GM12878 (cell line): ENCODE measurements at regions of chr1 and their contacts with region 1.

Region 1: DNA sequence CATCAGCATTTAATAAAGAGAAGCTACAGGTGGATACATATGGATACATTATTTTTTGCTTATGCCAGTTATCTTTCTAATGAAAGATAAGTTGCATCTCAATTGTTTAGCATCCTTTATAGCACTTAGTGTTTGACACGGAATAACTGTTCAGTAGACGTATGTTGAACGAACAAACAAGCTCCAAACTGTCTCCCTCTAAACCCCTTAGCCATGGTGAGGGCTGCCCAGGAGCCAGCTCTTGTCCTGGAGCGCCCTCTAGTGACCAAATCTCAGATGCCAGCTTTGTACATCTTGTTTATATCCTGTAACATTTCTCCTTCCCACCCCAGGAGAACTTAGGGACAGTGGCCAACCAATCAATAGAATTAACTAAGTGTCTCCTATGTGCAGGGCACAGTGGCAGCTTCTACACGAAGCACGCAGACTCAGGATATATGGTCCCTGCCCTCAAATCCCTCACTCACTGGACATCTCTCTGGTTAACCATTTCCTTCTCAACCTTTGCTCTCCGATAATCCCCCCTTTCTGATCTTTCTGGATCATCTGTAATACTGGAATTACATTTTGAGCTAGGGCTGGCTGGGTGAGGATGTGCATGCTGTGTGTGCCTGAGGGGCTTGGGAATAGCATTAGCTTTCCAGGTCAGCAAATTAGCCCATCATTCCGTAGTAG is 22.9 kb downstream of the KCNA10 start:
- DNase-seq: no peak
- ATAC-seq: peak; percentile 96
- H3K4me3 ChIP-seq: no peak overlapping the region
- H3K27ac ChIP-seq: no peak overlapping the region
- H3K4me1 ChIP-seq: no peaks in the 10 kb centered on the region
- H3K27me3 ChIP-seq: no peaks in the 10 kb centered on the region; a peak in 1 of 4 replicates
- CTCF ChIP-seq: peak; percentile 91 to 93 (median 91)
- EP300 ChIP-seq: no peak
- POLR2A ChIP-seq: no peak
- RAD21 ChIP-seq: peak; percentile 94

Region 2: GRCh38 chr1:110203021-110203661 is 292.9 kb before region 1 on chr1:
- CTCF ChIA-PET with region 1: interaction called, 71 read pairs
- POLR2A ChIA-PET with region 1: no interaction called
- RAD21 ChIA-PET with region 1: interaction called, 22 read pairs
- SMC1A ChIA-PET with region 1: interaction called, 28 read pairs
- in situ Hi-C with region 1: no loop called
- intact Hi-C with region 1: loop called (anchors 1 kb)
- DNase-seq: peak; percentile 17
- ATAC-seq: peak; percentile 84
- H3K4me3 ChIP-seq: no peak overlapping the region
- H3K27ac ChIP-seq: no peak overlapping the region
- H3K4me1 ChIP-seq: no peaks in the 10 kb centered on the region
- H3K27me3 ChIP-seq: peaks cover 0 to 2% of the 10 kb centered on the region in 2 experiments; a peak in 2 of 4 replicates
- CTCF ChIP-seq: peak; percentile 81 to 89 (median 81)
- EP300 ChIP-seq: no peak
- POLR2A ChIP-seq: no peak
- RAD21 ChIP-seq: peak; percentile 90

Region 3: GRCh38 chr1:110254996-110255787 is 240.9 kb before region 1 on chr1:
- CTCF ChIA-PET with region 1: no interaction called
- POLR2A ChIA-PET with region 1: no interaction called
- RAD21 ChIA-PET with region 1: no interaction called
- SMC1A ChIA-PET with region 1: no interaction called
- in situ Hi-C with region 1: no loop called
- intact Hi-C with region 1: no loop called
- DNase-seq: no peak
- ATAC-seq: peak; percentile 73
- H3K4me3 ChIP-seq: no peak overlapping the region
- H3K27ac ChIP-seq: no peak overlapping the region
- H3K4me1 ChIP-seq: peaks cover 6% of the 10 kb centered on the region
- H3K27me3 ChIP-seq: no peaks in the 10 kb centered on the region
- CTCF ChIP-seq: no peak
- EP300 ChIP-seq: no peak
- POLR2A ChIP-seq: no peak
- RAD21 ChIP-seq: no peak

Region 4: DNA sequence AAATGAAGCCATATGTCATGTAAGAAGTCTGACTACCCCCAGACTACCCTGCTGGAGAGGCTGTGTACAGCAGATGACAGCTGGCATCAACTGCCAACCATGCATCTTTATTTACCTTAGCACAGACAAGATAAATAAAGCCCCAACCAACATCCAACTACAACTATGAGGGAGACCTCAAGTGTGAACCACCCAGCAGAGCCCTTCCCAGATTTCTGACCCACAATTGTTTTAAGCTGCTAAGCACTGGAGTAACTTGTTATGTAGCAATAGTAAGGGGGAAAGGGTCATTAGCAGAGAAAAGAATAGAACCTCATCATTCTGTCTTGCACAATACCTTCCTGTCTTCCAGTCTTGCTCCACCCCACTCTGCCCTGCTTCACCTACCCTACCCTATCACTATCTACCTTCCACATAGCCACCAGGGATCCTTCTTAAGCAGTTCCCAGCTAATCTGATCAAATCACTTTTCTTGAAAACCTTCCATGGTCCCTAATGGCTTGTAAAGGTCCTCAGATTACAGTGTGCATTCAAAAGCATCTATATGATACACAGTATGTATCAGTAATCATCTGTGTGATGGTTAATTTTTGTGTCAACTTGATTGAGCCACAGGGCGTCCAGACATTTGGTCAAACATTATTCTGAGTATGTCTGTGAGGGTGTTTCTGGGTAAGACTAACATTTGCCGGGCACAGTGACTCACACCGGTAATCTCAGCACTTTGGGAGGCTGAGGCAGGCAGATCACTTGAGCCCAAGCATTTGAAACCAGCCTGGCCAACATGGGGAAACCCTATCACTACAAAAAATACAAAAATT is 176.5 kb before region 1 on chr1:
- CTCF ChIA-PET with region 1: interaction called, 7 read pairs
- POLR2A ChIA-PET with region 1: no interaction called
- RAD21 ChIA-PET with region 1: interaction called, 10 read pairs
- SMC1A ChIA-PET with region 1: no interaction called
- in situ Hi-C with region 1: no loop called
- intact Hi-C with region 1: no loop called
- DNase-seq: no peak
- ATAC-seq: no peak
- H3K4me3 ChIP-seq: no peak overlapping the region
- H3K27ac ChIP-seq: no peak overlapping the region
- H3K4me1 ChIP-seq: no peaks in the 10 kb centered on the region
- H3K27me3 ChIP-seq: no peaks in the 10 kb centered on the region
- CTCF ChIP-seq: no peak
- EP300 ChIP-seq: no peak
- POLR2A ChIP-seq: no peak
- RAD21 ChIP-seq: no peak

Region 5: DNA sequence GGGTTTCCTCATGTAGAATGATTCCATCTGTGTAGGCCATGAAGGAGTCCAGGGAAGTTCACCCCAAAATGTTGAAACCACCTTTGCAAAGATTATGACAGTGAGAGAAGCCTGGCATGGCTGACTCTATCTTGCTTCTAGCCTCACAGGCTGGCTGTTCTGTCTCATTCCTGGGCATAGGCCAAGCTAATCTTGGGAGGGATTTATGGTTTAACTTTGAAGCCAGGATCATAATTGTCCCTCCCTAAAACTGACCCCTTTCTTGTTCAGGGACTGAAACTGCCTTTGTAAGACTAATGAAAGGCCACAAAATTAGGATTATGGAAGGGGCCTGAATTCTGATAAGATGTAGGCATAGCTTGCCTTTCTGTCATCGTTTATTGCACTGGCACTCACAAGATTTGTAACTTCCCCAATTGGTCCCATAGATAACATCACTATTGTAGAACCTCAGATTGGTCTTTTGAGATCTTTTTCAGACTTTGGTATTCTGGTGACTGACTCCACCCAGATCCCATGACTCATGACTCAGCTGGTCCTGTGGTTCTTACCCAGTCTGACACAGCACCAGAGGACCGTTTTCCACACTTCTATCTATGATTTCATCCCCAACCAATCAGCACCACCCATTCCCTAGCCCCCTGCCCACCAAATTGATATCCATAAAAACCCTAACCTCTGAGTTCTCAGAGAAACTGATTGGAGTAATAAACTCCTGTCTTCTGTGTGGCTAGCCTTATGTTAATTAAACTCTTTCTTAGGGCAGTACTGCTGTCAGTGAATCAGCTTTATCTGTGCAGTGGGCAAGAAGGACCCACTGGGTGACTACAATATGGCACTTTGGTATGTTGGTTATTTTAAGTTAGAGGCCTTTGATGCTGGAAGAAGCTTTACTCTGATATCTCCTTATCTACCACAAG is 74.9 kb before region 1 on chr1:
- CTCF ChIA-PET with region 1: interaction called, 22 read pairs
- POLR2A ChIA-PET with region 1: no interaction called
- RAD21 ChIA-PET with region 1: interaction called, 4 read pairs
- SMC1A ChIA-PET with region 1: no interaction called
- in situ Hi-C with region 1: no loop called
- intact Hi-C with region 1: no loop called
- DNase-seq: no peak
- ATAC-seq: no peak
- H3K4me3 ChIP-seq: no peak overlapping the region
- H3K27ac ChIP-seq: no peak overlapping the region
- H3K4me1 ChIP-seq: no peaks in the 10 kb centered on the region
- H3K27me3 ChIP-seq: peaks cover 0 to 2% of the 10 kb centered on the region in 2 experiments; a peak in 2 of 4 replicates
- CTCF ChIP-seq: no peak
- EP300 ChIP-seq: no peak
- POLR2A ChIP-seq: no peak
- RAD21 ChIP-seq: no peak

Region 6: DNA sequence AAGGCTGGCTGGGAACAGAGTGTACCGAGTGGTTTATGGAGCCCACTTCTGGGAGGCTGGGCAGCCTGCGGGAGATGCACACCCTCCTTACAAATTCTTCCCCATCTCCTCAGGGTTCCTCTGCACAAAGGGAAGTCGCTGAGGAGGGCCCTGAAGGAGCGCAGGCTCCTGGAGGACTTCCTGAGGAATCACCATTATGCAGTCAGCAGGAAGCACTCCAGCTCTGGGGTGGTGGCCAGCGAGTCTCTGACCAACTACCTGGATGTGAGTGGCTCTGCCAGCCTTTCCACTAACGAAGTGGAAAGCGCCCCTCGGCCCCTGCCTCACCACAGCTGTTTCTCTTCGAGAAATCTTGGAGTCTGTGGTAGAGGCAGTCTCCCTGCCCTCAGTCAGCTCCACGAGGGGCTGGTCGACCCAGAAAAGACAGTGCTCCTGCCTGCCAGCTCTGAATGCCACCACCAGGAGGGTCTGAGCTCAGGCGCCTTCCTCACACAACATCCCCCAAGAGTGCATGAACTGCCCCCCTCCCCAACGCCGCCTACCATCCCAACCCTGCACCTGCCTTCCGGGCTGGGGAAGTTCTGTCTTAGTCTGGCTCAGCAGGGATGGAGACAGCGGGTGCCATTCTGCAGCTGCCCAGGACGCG is 13.3 kb before region 1 on chr1:
- CTCF ChIA-PET with region 1: interaction called, 15 read pairs
- POLR2A ChIA-PET with region 1: no interaction called
- RAD21 ChIA-PET with region 1: interaction called, 8 read pairs
- SMC1A ChIA-PET with region 1: interaction called, 4 read pairs
- in situ Hi-C with region 1: no loop called
- intact Hi-C with region 1: no loop called
- DNase-seq: no peak
- ATAC-seq: no peak
- H3K4me3 ChIP-seq: no peak overlapping the region
- H3K27ac ChIP-seq: no peak overlapping the region
- H3K4me1 ChIP-seq: no peaks in the 10 kb centered on the region
- H3K27me3 ChIP-seq: peaks cover 3 to 6% of the 10 kb centered on the region in 2 experiments; a peak in 3 of 4 replicates
- CTCF ChIP-seq: no peak
- EP300 ChIP-seq: no peak
- POLR2A ChIP-seq: no peak
- RAD21 ChIP-seq: no peak

Region 7: GRCh38 chr1:110605901-110606656 is 110.0 kb after region 1 on chr1 and contains the start of gene KCNA2:
- CTCF ChIA-PET with region 1: no interaction called
- POLR2A ChIA-PET with region 1: no interaction called
- RAD21 ChIA-PET with region 1: no interaction called
- SMC1A ChIA-PET with region 1: no interaction called
- in situ Hi-C with region 1: no loop called
- intact Hi-C with region 1: no loop called
- DNase-seq: no peak
- ATAC-seq: peak; percentile 41
- H3K4me3 ChIP-seq: 0 out of 2 replicates have a peak within 1 kb of the TSS, but pooled peaks have one; percentile 22
- H3K27ac ChIP-seq: no peak within 1 kb of the TSS
- H3K4me1 ChIP-seq: no peaks in the 10 kb centered on the region; the same call in 1 of the 2 replicates
- H3K27me3 ChIP-seq: peaks cover 25 to 31% of the 10 kb centered on the region in 2 experiments
- CTCF ChIP-seq: no peak
- EP300 ChIP-seq: no peak
- POLR2A ChIP-seq: no peak
- RAD21 ChIP-seq: no peak
- polyA plus RNA-seq, gene KCNA2: 0.02 TPM in 1 of 2 experiments, not detected in the other

Region 8: GRCh38 chr1:111127923-111128643 is 632.0 kb after region 1 on chr1:
- CTCF ChIA-PET with region 1: no interaction called
- POLR2A ChIA-PET with region 1: no interaction called
- RAD21 ChIA-PET with region 1: no interaction called
- SMC1A ChIA-PET with region 1: no interaction called
- in situ Hi-C with region 1: no loop called
- intact Hi-C with region 1: no loop called
- DNase-seq: peak; percentile 81
- ATAC-seq: peak; percentile 90
- H3K4me3 ChIP-seq: 0 out of 2 replicates have a peak overlapping the region, but pooled peaks have one; percentile 45
- H3K27ac ChIP-seq: peak overlapping the region; percentile 94
- H3K4me1 ChIP-seq: peaks cover 43% of the 10 kb centered on the region
- H3K27me3 ChIP-seq: no peaks in the 10 kb centered on the region
- CTCF ChIP-seq: no peak
- EP300 ChIP-seq: peak; percentile 26 to 54; a peak in 1 of 4 replicates
- POLR2A ChIP-seq: no peak
- RAD21 ChIP-seq: no peak